PC-3 (cell line): ENCODE measurements at regions of chr12 and their contacts with region 1.

Region 1: GRCh38 chr12:55940065-55940732 is 9.2 kb downstream of the DGKA start:
- DNase-seq: peak; percentile 91
- ATAC-seq: peak; percentile 96
- H3K4me3 ChIP-seq: peak overlapping the region; percentile 37; the same call in 1 of the 2 replicates
- H3K27ac ChIP-seq: 0 out of 2 replicates have a peak overlapping the region, but pooled peaks have one; percentile 2
- H3K4me1 ChIP-seq: peaks cover 21% of the 10 kb centered on the region
- H3K27me3 ChIP-seq: no peaks in the 10 kb centered on the region
- CTCF ChIP-seq: peak; percentile 95

Region 2: GRCh38 chr12:55762646-55763045 is 177.6 kb before region 1 on chr12:
- CTCF ChIA-PET with region 1: interaction called, 11 read pairs
- POLR2A ChIA-PET with region 1: no interaction called
- intact Hi-C with region 1: no loop called
- DNase-seq: no peak
- ATAC-seq: no peak
- H3K4me3 ChIP-seq: no peak overlapping the region
- H3K27ac ChIP-seq: no peak overlapping the region
- H3K4me1 ChIP-seq: no peaks in the 10 kb centered on the region
- H3K27me3 ChIP-seq: no peaks in the 10 kb centered on the region
- CTCF ChIP-seq: no peak

Region 3: DNA sequence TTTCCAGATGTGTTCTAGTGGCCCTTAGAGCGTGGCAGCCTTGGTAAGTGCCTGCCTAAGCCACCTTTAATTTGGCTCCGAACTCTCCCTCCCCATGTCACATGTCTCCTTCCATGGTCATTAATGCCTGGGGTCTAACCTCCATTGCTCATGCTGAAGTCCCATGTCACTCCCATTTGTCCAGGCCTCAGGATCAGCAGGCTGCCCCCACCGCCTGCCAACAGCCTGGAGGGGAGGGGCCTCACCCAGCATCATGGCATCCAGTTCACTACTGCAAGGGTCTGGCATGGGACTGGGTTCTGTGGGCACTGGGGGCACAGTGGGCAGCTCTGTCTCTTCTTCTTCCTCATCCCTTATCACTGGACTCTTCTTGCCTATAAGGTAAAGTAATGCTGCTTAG is 101.8 kb before region 1 on chr12:
- CTCF ChIA-PET with region 1: interaction called, 12 read pairs
- POLR2A ChIA-PET with region 1: no interaction called
- intact Hi-C with region 1: no loop called
- DNase-seq: no peak
- ATAC-seq: no peak
- H3K4me3 ChIP-seq: no peak overlapping the region
- H3K27ac ChIP-seq: no peak overlapping the region
- H3K4me1 ChIP-seq: peaks cover 9% of the 10 kb centered on the region
- H3K27me3 ChIP-seq: no peaks in the 10 kb centered on the region
- CTCF ChIP-seq: no peak

Region 4: DNA sequence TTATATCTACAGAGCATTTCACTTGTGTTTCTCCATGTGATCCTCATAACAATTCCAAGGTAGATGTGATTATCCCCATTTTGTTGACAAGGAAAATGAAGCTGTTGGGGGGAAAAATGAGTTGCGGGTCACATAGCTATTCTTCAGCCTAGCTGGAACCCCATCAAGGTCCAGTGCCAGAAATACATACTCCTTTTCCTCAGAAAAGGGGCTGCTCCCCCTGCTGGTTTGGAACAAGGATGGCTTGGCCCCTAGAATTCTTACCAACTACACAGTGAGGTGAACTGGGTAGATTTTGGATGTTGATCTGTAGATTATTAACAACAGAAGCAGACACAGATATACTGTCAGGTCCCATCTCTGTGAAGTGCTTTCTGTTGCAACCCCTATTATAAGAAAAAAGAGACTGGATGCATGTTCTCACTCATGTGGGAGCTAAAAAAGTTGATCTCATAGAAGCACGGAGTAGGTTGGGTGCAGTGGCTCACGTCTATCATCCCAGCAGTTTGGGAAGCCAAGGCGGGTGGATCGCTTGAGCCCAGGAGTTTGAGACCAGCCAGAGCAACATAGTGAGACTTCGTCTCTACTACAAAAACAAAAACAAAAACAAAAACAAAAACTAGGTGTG is 89.6 kb after region 1 on chr12:
- CTCF ChIA-PET with region 1: no interaction called
- POLR2A ChIA-PET with region 1: no interaction called
- intact Hi-C with region 1: no loop called
- DNase-seq: peak; percentile 59
- ATAC-seq: peak; percentile 81
- H3K4me3 ChIP-seq: no peak overlapping the region
- H3K27ac ChIP-seq: peak overlapping the region; percentile 27
- H3K4me1 ChIP-seq: peaks cover 17% of the 10 kb centered on the region
- H3K27me3 ChIP-seq: no peaks in the 10 kb centered on the region
- CTCF ChIP-seq: peak; percentile 85